ENCODE measurements at regions of chr2 and their contacts with region 1.

Region 1: GRCh38 chr2:113138428-113139322 is 11.3 kb downstream of the IL1RN start:
- DNase-seq: no peak
- ATAC-seq: peak; percentile 64

Region 2: DNA sequence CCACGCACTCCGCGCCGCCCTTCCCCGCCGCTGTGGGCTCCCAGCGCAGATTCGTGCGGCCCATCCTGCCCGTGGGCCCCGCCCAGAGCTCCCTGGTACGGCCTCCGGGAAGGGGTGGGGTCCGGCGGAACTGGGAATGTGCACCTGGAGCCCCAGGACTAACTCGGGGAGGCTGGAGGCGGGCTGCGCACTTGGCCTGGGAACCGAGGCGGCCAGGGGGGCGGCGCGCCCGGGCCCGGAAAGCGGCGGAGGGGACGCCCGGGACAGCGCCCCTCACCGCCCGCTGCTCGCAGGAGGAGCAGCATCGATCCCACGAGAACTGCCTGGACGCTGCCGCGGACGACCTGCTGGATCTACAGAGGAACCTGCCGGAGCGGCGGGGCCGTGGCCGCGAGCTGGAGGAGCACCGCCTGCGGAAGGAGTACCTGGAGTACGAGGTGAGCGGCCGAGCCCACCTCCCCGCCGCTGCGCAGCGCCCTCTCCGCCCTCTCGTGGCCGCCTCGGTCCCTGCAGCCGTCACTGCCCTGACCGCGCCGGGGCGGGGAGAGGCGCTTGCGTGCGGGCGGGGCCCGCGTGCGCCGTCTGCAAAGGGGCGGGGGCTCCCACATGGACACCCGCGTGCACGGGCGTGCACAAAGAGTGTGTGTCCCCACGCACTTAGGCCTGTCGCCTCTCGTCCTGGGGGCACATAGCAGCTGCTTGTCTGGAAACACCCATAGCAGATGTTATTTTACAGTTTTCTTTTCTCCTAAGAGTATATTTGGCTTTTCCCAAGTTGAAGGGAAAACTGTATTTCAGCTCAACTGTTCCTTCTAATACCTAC is 60.3 kb after region 1 on chr2:
- intact Hi-C with region 1: loop called (anchors 5 kb)
- DNase-seq: peak; percentile 89
- ATAC-seq: peak; percentile 96

Region 3: GRCh38 chr2:113390124-113390849 is 251.6 kb after region 1 on chr2:
- intact Hi-C with region 1: loop called (anchors 5 kb)
- DNase-seq: no peak
- ATAC-seq: peak; percentile 91